ENCODE measurements at regions of chr11 and their contacts with region 1.

Region 1: DNA sequence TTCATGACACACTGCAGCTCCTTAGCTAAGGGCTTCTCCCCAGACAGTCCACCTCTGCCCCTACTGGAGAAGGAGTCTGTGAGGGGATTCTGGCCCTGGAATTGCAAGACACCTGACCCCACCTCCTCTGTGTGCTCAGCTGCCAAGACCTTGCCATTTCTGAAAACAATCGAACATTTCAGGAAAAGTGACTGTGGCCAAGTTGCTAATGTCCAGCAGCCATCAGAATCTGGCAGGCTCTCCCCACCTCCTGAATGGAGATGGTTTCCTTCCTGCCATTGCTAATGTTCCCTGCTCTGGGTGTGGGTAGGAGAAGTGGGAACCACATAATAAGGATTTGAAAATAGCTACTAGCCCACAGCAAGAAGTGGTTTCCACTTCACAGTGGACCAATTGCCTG is 127.2 kb upstream of the ALX4 start:
- DNase-seq: no peak
- H3K4me3 ChIP-seq: no peak overlapping the region
- H3K27ac ChIP-seq: no peak overlapping the region
- H3K4me1 ChIP-seq: no peaks in the 10 kb centered on the region
- H3K27me3 ChIP-seq: peaks cover 43% of the 10 kb centered on the region
- CTCF ChIP-seq: no peak

Region 2: DNA sequence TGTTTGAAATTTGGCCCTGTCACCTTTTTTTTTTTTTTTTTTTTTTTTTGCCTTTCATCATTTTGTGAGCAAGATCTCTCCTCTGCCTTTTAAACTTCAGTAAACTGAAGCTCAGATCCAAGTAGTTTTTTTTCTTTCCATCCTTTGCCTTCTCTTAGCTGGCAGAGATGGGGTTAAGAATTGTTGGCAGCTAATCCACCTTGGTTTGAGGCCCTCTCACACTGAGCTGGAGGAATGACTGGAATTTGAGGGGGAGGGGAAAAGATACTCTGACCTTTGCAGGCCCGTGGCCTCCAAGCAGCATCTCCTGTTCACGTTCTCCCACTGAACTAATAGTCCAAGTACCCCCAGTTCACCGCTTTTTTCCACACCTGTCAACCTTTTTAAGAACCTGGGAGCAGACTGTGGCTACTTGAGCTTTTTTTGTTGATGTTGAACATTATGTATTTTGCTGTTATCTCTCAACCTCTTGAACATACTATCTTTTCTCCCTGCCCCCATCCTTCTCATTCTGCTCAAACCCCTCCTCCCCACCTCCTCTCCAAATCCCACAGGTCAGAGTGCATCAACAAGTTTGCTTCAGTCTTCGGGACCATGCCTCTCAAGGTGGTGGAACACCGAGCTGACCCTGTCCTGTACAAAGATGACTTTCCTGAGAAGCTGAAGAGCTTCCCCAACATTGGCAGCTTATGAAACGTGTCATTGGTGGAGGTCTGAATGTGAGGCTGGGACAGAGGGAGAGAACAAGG is 193.4 kb before region 1 on chr11:
- CTCF ChIA-PET with region 1: no interaction called
- POLR2A ChIA-PET with region 1: no interaction called
- intact Hi-C with region 1: no loop called
- DNase-seq: peak; percentile 69
- H3K4me3 ChIP-seq: no peak overlapping the region
- H3K27ac ChIP-seq: peak overlapping the region; percentile 18
- H3K4me1 ChIP-seq: peaks cover 32% of the 10 kb centered on the region
- H3K27me3 ChIP-seq: no peaks in the 10 kb centered on the region
- CTCF ChIP-seq: no peak

Region 3: GRCh38 chr11:44400431-44400830 is 36.7 kb before region 1 on chr11:
- CTCF ChIA-PET with region 1: no interaction called
- POLR2A ChIA-PET with region 1: no interaction called
- intact Hi-C with region 1: loop called (anchors 5 kb)
- DNase-seq: peak; percentile 34
- H3K4me3 ChIP-seq: no peak overlapping the region
- H3K27ac ChIP-seq: no peak overlapping the region
- H3K4me1 ChIP-seq: no peaks in the 10 kb centered on the region
- H3K27me3 ChIP-seq: peaks cover 9% of the 10 kb centered on the region
- CTCF ChIP-seq: no peak

Region 4: GRCh38 chr11:46389450-46390253 is 1952.5 kb after region 1 on chr11:
- CTCF ChIA-PET with region 1: no interaction called
- POLR2A ChIA-PET with region 1: no interaction called
- intact Hi-C with region 1: no loop called
- DNase-seq: peak; percentile 94
- H3K4me3 ChIP-seq: peak overlapping the region; percentile 51
- H3K27ac ChIP-seq: no peak overlapping the region
- H3K4me1 ChIP-seq: peaks cover 39% of the 10 kb centered on the region
- H3K27me3 ChIP-seq: peaks cover 49% of the 10 kb centered on the region
- CTCF ChIP-seq: peak; percentile 100